Activated naive CD4-positive, alpha-beta T cell treated with anti-CD3 and anti-CD28 coated beads, Interleukin-2, amount 10 ng/mL, durations not matched to agents 7 days and 5 days (primary cell): ENCODE measurements at regions of chr7 and their contacts with region 1.

Region 1: DNA sequence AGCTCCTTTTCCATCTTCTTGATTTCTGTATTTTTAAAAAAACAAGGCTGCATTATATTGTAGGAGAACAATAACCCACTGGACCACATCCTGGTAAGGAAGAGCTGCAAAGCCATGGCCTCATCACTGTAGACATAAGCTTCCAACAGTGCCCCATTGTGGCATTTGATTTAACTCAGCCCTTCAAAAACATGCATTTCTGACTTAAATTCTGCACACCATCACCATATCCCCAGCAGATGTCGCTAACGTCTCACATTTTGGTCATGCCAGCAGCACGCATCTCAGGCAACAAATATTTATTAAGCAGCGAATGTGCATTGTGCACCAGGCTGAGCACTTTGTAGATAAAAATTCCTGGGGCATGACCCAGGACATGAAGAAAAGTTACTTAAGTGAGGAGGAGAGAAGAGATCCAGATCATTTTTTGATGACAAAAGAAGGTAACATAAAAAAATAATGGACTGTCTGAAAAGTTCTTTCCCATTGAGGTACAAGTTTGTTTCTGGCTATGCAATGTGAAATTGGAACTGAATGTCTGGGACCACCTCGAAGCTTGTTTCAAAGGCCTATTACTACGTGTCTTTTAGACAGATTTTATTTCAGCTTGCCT is 164.6 kb upstream of the CDCA7L start:
- DNase-seq: peak; percentile 80
- H3K4me3 Mint-ChIP-seq: no peak overlapping the region
- H3K27ac Mint-ChIP-seq: no peak overlapping the region
- H3K4me1 Mint-ChIP-seq: no peaks in the 10 kb centered on the region
- H3K27me3 Mint-ChIP-seq: peaks cover 12% of the 10 kb centered on the region

Region 2: GRCh38 chr7:22082886-22083703 is 27.2 kb before region 1 on chr7:
- CTCF ChIA-PET with region 1: interaction called, 11 read pairs
- DNase-seq: peak; percentile 87
- H3K4me3 Mint-ChIP-seq: peak overlapping the region; percentile 74
- H3K27ac Mint-ChIP-seq: peak overlapping the region; percentile 64
- H3K4me1 Mint-ChIP-seq: peaks cover 12% of the 10 kb centered on the region
- H3K27me3 Mint-ChIP-seq: peaks cover 50% of the 10 kb centered on the region

Region 3: DNA sequence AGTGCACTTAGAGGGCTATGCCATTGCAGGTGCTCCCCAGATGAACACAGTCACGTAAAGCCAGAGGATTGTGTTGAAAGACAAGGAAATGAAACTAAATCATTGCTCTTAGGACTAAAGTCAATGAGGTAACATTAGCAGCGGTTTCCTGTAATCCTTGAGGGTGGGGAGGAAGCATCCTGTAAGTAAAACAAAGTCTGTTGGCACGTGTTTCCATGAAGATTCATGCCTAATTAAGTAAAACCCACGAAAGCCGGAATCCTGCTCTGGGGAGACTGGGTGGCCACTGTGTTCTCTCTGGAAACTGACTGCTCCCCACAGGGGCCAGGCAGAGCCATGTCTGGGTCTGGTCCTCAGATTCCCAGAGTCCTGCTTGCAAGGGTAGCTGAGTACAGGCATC is 371.4 kb after region 1 on chr7:
- CTCF ChIA-PET with region 1: interaction called, 20 read pairs
- DNase-seq: peak; percentile 27
- H3K4me3 Mint-ChIP-seq: no peak overlapping the region
- H3K27ac Mint-ChIP-seq: peak overlapping the region; percentile 24
- H3K4me1 Mint-ChIP-seq: peaks cover 15% of the 10 kb centered on the region
- H3K27me3 Mint-ChIP-seq: peaks cover 23% of the 10 kb centered on the region

Region 4: DNA sequence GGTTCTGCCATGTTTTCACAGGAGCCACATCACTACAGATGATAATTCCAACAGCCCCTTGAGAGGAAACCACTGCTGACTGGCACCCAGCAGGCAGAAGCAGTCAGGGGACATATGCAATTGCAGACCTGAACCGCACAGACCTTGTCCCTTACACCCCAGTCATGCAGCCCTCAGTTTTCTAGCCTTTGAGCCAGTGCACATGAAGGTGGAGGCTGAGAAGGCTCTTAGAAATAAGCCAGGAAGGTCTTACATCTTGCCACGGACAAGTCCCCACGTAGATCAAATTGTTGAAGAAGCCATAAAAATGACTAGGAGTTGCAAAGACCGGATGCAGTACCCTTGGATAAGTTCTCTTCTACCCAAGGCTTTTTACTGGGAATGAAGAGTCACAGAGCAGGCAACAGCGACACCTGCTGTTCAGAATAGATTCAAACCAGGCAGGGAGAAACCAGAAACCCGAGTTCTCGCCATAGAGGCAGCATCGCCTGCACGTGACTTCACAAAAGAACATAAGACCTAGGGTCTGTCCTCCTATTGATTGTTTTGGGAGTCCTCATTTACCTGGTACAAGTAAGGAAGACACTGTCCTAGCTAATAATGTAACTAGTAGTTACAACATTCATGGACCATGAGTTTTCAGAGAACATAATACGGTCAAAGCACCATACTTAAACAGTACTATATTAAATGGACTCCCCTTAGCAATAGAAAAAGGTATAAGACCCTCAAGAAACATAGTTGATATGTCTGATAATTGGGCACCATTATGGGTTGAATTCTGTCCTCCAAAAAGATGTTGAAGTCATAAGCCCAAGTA is 378.5 kb after region 1 on chr7:
- CTCF ChIA-PET with region 1: interaction called, 57 read pairs
- DNase-seq: peak; percentile 76
- H3K4me3 Mint-ChIP-seq: no peak overlapping the region
- H3K27ac Mint-ChIP-seq: no peak overlapping the region
- H3K4me1 Mint-ChIP-seq: peaks cover 4% of the 10 kb centered on the region
- H3K27me3 Mint-ChIP-seq: peaks cover 20% of the 10 kb centered on the region

Region 5: GRCh38 chr7:22499044-22499443 is 388.7 kb after region 1 on chr7:
- CTCF ChIA-PET with region 1: interaction called, 10 read pairs
- DNase-seq: no peak
- H3K4me3 Mint-ChIP-seq: no peak overlapping the region
- H3K27ac Mint-ChIP-seq: no peak overlapping the region
- H3K4me1 Mint-ChIP-seq: peaks cover 8% of the 10 kb centered on the region
- H3K27me3 Mint-ChIP-seq: peaks cover 26% of the 10 kb centered on the region